Naive thymus-derived CD4-positive, alpha-beta T cell (primary cell): ENCODE measurements at regions of chr11 and their contacts with region 1.

Region 1: DNA sequence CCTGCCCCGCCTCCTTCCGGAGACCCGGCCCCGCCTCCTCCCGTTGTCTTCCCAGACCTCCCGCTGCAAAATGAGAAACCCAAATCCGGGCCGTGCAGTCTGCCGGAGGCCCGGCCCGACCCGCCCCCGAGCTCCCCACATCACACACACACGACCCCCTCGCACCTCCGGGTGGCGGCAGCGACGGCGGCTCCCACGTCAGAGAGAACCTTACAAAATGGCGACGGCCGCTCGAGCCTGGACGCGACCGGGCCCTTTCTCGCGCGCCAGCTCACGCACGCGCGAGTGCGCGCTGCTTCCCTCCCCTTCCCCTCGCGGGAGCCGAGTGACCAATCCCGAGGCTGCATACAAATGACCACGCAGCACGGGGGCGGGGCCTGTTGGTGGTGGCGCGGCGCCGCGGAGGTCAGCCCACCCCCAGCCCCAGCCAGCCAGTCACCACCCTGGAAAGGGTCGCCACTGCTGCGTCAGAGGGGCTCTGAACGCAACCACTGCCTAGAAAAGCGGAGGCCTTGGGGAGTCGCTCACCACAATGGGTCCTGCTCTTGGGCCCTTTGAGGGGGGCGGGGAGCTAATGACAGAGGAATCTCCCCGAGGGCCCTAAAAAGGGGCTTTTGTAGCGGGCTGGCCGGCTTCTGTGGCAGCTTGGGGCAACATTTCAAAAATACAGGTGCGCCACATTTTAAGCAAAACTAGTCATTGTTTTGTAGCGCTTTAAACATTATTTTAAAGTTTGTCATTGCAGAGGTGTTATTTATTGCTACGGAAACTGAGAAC is at the start of gene RBM4B:
- DNase-seq: peak; percentile 89 to 96 (median 94)
- ATAC-seq: peak; percentile 94
- H3K4me3 ChIP-seq: peak within 1 kb of the TSS; percentile 100
- H3K4me3 Mint-ChIP-seq: peak within 1 kb of the TSS; percentile 87 to 98 (median 96)
- H3K27ac ChIP-seq: peak within 1 kb of the TSS; percentile 95
- H3K27ac Mint-ChIP-seq: peak within 1 kb of the TSS; percentile 94 to 100 (median 99)
- H3K4me1 ChIP-seq: peaks cover 23 to 31% of the 10 kb centered on the region in 2 donors
- H3K4me1 Mint-ChIP-seq: peaks cover 21 to 49% (median 37%) of the 10 kb centered on the region in 7 donors
- H3K27me3 ChIP-seq: no peaks in the 10 kb centered on the region
- H3K27me3 Mint-ChIP-seq: no peaks in the 10 kb centered on the region
- total RNA-seq, gene RBM4B: 9.8 to 27.2 (median 19.7) TPM

Region 2: DNA sequence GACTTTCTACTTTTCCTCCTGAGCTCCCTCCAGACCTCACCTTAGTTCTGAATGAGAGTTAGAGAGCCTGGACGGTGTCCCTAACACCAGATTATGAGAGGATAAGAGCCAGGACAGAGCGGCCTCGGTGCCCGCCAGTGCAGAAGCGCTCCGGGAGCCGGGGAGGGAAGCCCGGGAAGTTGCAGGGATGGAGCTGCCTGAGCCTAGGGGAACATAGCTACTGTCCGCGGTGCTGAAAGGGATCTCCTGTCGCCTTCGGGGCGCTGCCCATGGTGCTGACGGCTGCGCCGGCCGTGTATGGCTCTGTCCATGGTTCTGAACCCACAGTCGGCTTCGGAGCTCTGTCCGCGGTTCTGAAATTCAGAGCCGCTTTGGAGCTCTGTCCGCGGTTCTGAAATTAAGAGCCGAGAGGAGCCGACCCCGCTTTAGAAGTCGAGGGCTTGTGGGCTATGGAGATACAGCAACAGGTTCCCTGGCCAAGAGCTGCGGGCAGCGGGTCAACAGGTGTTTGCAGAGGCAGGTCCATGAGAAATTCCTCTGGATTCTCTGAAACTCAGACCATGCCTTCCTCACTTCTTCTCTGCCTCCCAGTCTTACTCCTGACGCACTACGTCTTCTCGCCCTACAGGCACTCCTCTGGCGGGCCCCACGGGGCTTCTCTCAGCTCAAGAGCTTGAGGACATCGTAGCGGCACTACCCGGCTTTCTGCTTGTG is 256.1 kb before region 1 on chr11:
- CTCF ChIA-PET with region 1: interaction called, 6 read pairs
- POLR2A ChIA-PET with region 1: interaction called, 4 read pairs
- intact Hi-C with region 1: loop called (anchors 1 to 5 kb)
- DNase-seq: peak; percentile 79 to 94 (median 86)
- ATAC-seq: peak; percentile 100
- H3K4me3 ChIP-seq: no peak overlapping the region
- H3K4me3 Mint-ChIP-seq: peak overlapping the region in 4 of 10 donors; percentile 20 to 73 (median 41)
- H3K27ac ChIP-seq: no peak overlapping the region
- H3K27ac Mint-ChIP-seq: peak overlapping the region in 6 of 9 donors; percentile 31 to 85 (median 58)
- H3K4me1 ChIP-seq: no peaks in the 10 kb centered on the region
- H3K4me1 Mint-ChIP-seq: peaks cover 9 to 22% (median 10%) of the 10 kb centered on the region in 7 donors
- H3K27me3 ChIP-seq: peaks cover 7 to 22% of the 10 kb centered on the region in 2 donors
- H3K27me3 Mint-ChIP-seq: peaks cover 23 to 29% (median 29%) of the 10 kb centered on the region in 5 donors

Region 3: GRCh38 chr11:66545701-66546367 is 132.0 kb before region 1 on chr11 and contains the start of gene ZDHHC24:
- CTCF ChIA-PET with region 1: interaction called, 3 read pairs
- POLR2A ChIA-PET with region 1: interaction called, 11 read pairs
- intact Hi-C with region 1: loop called (anchors 1 kb)
- DNase-seq: peak; percentile 60 to 94 (median 74)
- ATAC-seq: peak; percentile 86
- H3K4me3 ChIP-seq: peak within 1 kb of the TSS; percentile 78
- H3K4me3 Mint-ChIP-seq: peak within 1 kb of the TSS; percentile 79 to 92 (median 88)
- H3K27ac ChIP-seq: peak within 1 kb of the TSS; percentile 90
- H3K27ac Mint-ChIP-seq: peak within 1 kb of the TSS; percentile 67 to 95 (median 89)
- H3K4me1 ChIP-seq: peaks cover 19 to 21% of the 10 kb centered on the region in 2 donors
- H3K4me1 Mint-ChIP-seq: peaks cover 13 to 46% (median 33%) of the 10 kb centered on the region in 7 donors
- H3K27me3 ChIP-seq: no peaks in the 10 kb centered on the region
- H3K27me3 Mint-ChIP-seq: peaks cover 0 to 16% (median 0%) of the 10 kb centered on the region in 5 donors
- total RNA-seq, gene ZDHHC24: 14.5 to 24.5 (median 19.2) TPM

Region 4: DNA sequence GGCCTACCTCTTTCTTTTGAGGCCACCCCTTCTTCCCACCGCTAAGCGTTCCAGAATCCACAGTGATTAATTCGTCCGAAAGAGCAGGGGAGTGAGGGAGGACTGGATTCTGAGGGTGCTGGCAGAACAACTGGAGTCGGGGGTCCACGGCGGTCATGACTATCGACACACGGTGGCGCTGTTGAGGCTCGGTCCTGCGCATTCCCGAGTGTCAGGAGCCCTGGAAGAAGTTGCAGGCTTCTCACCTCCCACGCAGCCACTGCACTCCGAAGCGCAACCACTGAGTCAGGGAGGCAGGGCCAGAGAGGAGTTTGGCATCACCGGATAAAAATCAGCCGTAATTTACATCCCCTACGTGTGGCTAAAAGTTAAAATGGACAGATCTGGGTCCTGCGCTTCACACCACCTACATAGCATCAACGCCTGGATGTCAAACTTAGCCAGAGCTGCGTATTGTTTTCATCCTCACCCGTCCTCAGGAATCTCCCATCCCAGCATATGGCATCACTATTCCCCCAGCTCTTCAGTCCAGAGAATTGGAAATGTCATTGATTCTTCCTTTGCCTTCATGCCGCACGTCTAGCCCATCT is 98.7 kb before region 1 on chr11:
- CTCF ChIA-PET with region 1: interaction called, 137 read pairs
- POLR2A ChIA-PET with region 1: interaction called, 27 read pairs
- intact Hi-C with region 1: loop called in 1 of 2 experiments (anchors 1 kb)
- DNase-seq: peak; percentile 51 to 78 (median 66)
- ATAC-seq: peak; percentile 91
- H3K4me3 ChIP-seq: no peak overlapping the region
- H3K4me3 Mint-ChIP-seq: peak overlapping the region in 2 of 10 donors; percentile 22 to 53
- H3K27ac ChIP-seq: no peak overlapping the region
- H3K27ac Mint-ChIP-seq: peak overlapping the region in 2 of 9 donors; percentile 65 to 71
- H3K4me1 ChIP-seq: peaks cover 0 to 6% of the 10 kb centered on the region in 2 donors
- H3K4me1 Mint-ChIP-seq: peaks cover 0 to 11% (median 8%) of the 10 kb centered on the region in 7 donors
- H3K27me3 ChIP-seq: no peaks in the 10 kb centered on the region
- H3K27me3 Mint-ChIP-seq: peaks cover 0 to 25% (median 15%) of the 10 kb centered on the region in 5 donors

Region 5: GRCh38 chr11:66638177-66639065 is 39.4 kb before region 1 on chr11 and contains the start of gene RBM4:
- CTCF ChIA-PET with region 1: interaction called, 13 read pairs
- POLR2A ChIA-PET with region 1: interaction called, 54 read pairs
- intact Hi-C with region 1: loop called (anchors 1 kb)
- DNase-seq: peak; percentile 80 to 99 (median 98)
- ATAC-seq: peak; percentile 93
- H3K4me3 ChIP-seq: peak within 1 kb of the TSS; percentile 91
- H3K4me3 Mint-ChIP-seq: peak within 1 kb of the TSS; percentile 92 to 100 (median 94)
- H3K27ac ChIP-seq: peak within 1 kb of the TSS; percentile 93
- H3K27ac Mint-ChIP-seq: peak within 1 kb of the TSS; percentile 87 to 98 (median 96)
- H3K4me1 ChIP-seq: peaks cover 44 to 48% of the 10 kb centered on the region in 2 donors
- H3K4me1 Mint-ChIP-seq: peaks cover 45 to 73% (median 68%) of the 10 kb centered on the region in 7 donors
- H3K27me3 ChIP-seq: no peaks in the 10 kb centered on the region
- H3K27me3 Mint-ChIP-seq: no peaks in the 10 kb centered on the region
- total RNA-seq, gene RBM4: 139 to 239 (median 198) TPM

Region 6: DNA sequence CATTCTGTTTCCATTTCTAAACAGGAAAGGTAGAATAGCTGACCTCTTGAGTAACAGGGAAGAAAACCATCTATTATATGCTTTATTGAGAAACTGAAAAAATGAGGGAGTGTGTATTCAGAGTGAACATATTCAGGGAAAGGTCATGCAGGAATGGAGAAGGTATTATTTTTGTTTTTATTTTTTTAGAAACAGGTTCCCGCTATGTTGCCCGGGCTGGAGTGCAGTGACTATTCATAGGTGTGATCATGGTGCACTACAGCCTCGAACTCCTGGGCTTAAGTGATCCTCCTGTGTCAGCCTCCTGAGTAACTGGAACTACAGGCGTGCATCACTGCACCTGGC is 156.7 kb after region 1 on chr11:
- CTCF ChIA-PET with region 1: no interaction called
- POLR2A ChIA-PET with region 1: no interaction called
- intact Hi-C with region 1: loop called in 1 of 2 experiments (anchors 1 kb)
- DNase-seq: no peak
- ATAC-seq: no peak
- H3K4me3 ChIP-seq: no peak overlapping the region
- H3K4me3 Mint-ChIP-seq: no peak overlapping the region
- H3K27ac ChIP-seq: peak overlapping the region; percentile 6
- H3K27ac Mint-ChIP-seq: peak overlapping the region in 8 of 9 donors; percentile 22 to 92 (median 62)
- H3K4me1 ChIP-seq: peaks cover 3 to 6% of the 10 kb centered on the region in 2 donors
- H3K4me1 Mint-ChIP-seq: peaks cover 0 to 23% (median 18%) of the 10 kb centered on the region in 7 donors
- H3K27me3 ChIP-seq: no peaks in the 10 kb centered on the region
- H3K27me3 Mint-ChIP-seq: no peaks in the 10 kb centered on the region